A673 (cell line): ENCODE measurements at regions of chr11 and their contacts with region 1.

Region 1: GRCh38 chr11:47847892-47848635 is at the start of gene NUP160:
- DNase-seq: peak; percentile 93
- H3K4me3 ChIP-seq: peak within 1 kb of the TSS; percentile 62
- H3K27ac ChIP-seq: peak within 1 kb of the TSS; percentile 93
- H3K4me1 ChIP-seq: peaks cover 13% of the 10 kb centered on the region
- H3K27me3 ChIP-seq: no peaks in the 10 kb centered on the region
- CTCF ChIP-seq: 0 out of 2 replicates have a peak, but pooled peaks have one; percentile 27
- total RNA-seq, gene NUP160: 162 and 172 TPM in 2 replicates

Region 2: GRCh38 chr11:47750725-47751124 is 97.3 kb before region 1 on chr11:
- CTCF ChIA-PET with region 1: no interaction called
- POLR2A ChIA-PET with region 1: no interaction called
- intact Hi-C with region 1: no loop called
- DNase-seq: no peak
- H3K4me3 ChIP-seq: no peak overlapping the region
- H3K27ac ChIP-seq: no peak overlapping the region
- H3K4me1 ChIP-seq: no peaks in the 10 kb centered on the region
- H3K27me3 ChIP-seq: no peaks in the 10 kb centered on the region
- CTCF ChIP-seq: no peak

Region 3: DNA sequence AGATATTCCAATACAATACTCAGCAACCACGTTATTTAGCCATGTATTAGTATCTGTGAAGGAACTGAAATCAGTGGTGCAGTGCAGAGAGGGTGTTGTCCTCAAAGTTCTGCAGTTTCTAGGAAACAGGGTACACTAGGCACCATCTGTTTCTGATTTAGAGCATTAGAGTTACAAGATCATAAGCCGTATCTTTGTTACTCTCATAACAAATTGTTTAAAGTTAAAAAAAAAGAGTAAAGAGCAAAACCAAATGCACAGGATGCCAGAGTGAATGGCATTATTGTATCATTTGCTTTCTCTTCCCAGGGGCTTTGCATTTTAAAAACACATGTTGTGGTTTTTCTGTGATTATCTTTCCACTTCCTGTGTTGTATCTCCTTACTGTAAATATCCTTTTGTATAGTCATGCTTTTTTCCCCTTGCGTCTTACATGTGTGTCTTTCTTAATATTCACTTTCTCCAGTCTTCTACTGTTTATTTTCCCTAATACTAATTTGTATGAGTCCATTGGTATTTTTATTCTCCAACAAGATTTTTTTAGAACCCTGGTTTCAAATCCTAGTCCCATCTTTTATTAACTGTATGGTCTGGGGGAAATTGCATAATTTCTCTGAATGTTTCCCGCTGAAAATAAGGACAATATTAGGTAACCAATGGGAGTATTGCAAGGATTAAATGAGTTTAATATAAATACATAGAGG is 15.3 kb after region 1 on chr11:
- CTCF ChIA-PET with region 1: interaction called, 12 read pairs
- POLR2A ChIA-PET with region 1: no interaction called
- intact Hi-C with region 1: no loop called
- DNase-seq: peak; percentile 98
- H3K4me3 ChIP-seq: no peak overlapping the region
- H3K27ac ChIP-seq: peak overlapping the region; percentile 83
- H3K4me1 ChIP-seq: peaks cover 56% of the 10 kb centered on the region
- H3K27me3 ChIP-seq: no peaks in the 10 kb centered on the region
- CTCF ChIP-seq: no peak